Adrenal gland (tissue), 19 donors: ENCODE measurements at regions of chr18 and their contacts with region 1.

Region 1: GRCh38 chr18:34867520-34867919 is 157.4 kb downstream of the DTNA start:
- DNase-seq: no peak
- H3K4me3 ChIP-seq: no peak overlapping the region
- H3K27ac ChIP-seq: no peak overlapping the region
- H3K4me1 ChIP-seq: no peaks in the 10 kb centered on the region
- H3K27me3 ChIP-seq: no peaks in the 10 kb centered on the region
- CTCF ChIP-seq: peak in 1 of 6 experiments; percentile 14
- POLR2A ChIP-seq: no peak

Region 2: GRCh38 chr18:34620258-34620861 is 247.2 kb before region 1 on chr18:
- intact Hi-C with region 1: no loop called
- DNase-seq: no peak
- H3K4me3 ChIP-seq: no peak overlapping the region
- H3K27ac ChIP-seq: no peak overlapping the region
- H3K4me1 ChIP-seq: peaks cover 0 to 5% of the 10 kb centered on the region in 2 donors
- H3K27me3 ChIP-seq: no peaks in the 10 kb centered on the region
- CTCF ChIP-seq: no peak
- POLR2A ChIP-seq: no peak

Region 3: DNA sequence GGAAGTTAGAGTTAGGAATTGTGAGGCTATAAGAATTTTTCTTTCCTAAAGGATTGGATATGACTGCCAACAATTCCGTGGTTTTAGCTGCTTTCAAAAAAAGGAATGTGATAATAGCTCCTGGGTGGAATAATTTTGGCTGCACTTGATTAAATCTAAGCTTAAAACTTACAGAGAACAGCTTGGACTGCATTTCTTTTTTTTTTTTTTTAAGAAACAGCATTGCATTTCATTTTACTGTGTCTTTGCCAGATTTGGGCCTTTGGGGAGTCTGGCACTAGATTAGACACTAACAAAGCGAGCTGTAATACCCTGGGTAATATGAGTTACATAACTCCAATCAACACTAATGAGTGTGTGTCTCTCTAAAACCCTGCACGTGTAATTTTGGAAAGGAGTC is 335.5 kb after region 1 on chr18:
- intact Hi-C with region 1: loop called in 1 of 2 experiments (anchors 10 kb)
- DNase-seq: no peak
- H3K4me3 ChIP-seq: no peak overlapping the region
- H3K27ac ChIP-seq: no peak overlapping the region
- H3K4me1 ChIP-seq: peaks cover 0 to 5% of the 10 kb centered on the region in 2 donors
- H3K27me3 ChIP-seq: no peaks in the 10 kb centered on the region
- CTCF ChIP-seq: no peak
- POLR2A ChIP-seq: no peak

Region 4: GRCh38 chr18:36461551-36461987 is 1594.0 kb after region 1 on chr18:
- intact Hi-C with region 1: no loop called
- DNase-seq: no peak
- H3K4me3 ChIP-seq: no peak overlapping the region
- H3K27ac ChIP-seq: no peak overlapping the region
- H3K4me1 ChIP-seq: no peaks in the 10 kb centered on the region
- H3K27me3 ChIP-seq: no peaks in the 10 kb centered on the region
- CTCF ChIP-seq: no peak
- POLR2A ChIP-seq: no peak